GM10248 (cell line): ENCODE measurements at regions of chr10 and their contacts with region 1.

Region 1: DNA sequence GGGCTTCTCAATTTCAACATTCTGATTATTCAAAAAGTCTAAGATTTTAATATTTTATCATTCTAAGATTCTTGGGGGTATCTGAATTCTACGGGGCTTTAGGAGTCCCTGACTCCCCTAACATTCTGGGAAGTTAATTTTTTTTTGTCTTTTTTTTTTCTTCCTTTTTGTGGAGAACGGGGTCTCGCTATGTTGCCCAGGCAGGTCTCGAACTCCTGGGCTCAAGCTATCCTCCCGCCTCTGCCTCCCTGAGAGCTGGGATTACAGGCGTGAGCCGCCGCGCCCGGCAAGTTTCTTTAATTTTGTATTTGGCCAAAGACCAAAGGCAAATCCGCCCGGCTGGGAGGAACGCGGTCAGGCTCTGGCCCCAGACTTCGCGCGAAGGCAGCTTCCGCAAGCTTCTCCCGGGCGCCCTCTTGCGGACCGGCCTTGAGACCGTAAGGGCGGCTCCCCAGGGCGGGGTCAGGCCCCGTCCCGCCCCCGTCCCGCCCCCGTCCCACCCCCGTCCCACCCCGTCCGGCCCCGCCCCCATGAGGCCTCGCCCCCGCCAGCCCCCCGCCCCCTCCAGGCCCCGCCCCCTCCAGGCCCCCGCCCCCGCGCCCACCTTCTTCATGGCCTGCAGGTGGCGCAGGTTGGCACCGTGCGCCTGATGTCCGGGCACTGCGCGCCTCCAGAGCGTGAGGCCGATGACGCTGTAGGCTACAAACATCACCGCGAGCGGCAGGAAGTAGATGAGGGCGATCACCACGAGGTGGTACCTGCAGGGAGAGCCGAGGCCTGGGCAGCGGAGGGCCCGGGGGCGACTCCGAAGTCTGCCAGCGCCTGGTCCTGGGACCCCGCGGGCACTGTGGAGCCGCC is 8.2 kb downstream of the TACR2 start:
- DNase-seq: peak; percentile 95
- CTCF ChIP-seq: peak; percentile 86

Region 2: DNA sequence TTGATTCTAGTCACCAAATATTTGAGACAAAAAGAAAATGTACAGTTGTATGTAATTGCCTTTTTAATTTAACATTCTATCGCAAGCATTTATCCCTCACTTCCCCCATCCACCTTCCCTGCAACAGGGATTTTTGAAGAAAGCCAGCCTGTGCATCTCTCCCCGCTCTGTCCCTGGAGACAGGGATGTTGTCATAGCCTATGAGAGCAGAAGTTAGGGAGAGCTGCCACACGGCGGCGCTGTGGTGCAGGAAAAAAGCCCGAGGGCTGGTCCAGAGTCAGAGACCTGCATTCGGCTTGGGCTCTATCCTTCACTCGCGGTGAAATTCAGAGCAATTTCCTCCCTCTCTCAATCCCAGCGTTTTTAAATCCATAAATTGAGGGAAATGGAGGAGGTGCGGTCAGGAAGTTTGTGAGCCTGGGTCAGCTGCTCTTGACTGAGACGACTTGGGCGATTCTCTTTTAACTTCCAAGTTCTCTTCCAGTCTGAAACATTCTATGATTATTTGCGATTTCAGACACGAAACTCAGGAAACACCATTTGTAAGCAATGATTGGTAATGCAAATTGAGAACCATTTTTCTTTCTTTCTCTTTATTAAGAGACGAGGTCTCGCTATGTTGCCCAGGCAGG is 170.9 kb before region 1 on chr10:
- CTCF ChIA-PET with region 1: interaction called, 40 read pairs
- POLR2A ChIA-PET with region 1: no interaction called
- DNase-seq: peak; percentile 87
- CTCF ChIP-seq: peak; percentile 96

Region 3: GRCh38 chr10:69392481-69393000 is 16.0 kb before region 1 on chr10:
- CTCF ChIA-PET with region 1: interaction called, 30 read pairs
- POLR2A ChIA-PET with region 1: no interaction called
- DNase-seq: peak; percentile 88
- CTCF ChIP-seq: peak; percentile 96

Region 4: GRCh38 chr10:69397972-69398371 is 10.6 kb before region 1 on chr10:
- CTCF ChIA-PET with region 1: interaction called, 30 read pairs
- POLR2A ChIA-PET with region 1: no interaction called
- DNase-seq: no peak
- CTCF ChIP-seq: no peak

Region 5: DNA sequence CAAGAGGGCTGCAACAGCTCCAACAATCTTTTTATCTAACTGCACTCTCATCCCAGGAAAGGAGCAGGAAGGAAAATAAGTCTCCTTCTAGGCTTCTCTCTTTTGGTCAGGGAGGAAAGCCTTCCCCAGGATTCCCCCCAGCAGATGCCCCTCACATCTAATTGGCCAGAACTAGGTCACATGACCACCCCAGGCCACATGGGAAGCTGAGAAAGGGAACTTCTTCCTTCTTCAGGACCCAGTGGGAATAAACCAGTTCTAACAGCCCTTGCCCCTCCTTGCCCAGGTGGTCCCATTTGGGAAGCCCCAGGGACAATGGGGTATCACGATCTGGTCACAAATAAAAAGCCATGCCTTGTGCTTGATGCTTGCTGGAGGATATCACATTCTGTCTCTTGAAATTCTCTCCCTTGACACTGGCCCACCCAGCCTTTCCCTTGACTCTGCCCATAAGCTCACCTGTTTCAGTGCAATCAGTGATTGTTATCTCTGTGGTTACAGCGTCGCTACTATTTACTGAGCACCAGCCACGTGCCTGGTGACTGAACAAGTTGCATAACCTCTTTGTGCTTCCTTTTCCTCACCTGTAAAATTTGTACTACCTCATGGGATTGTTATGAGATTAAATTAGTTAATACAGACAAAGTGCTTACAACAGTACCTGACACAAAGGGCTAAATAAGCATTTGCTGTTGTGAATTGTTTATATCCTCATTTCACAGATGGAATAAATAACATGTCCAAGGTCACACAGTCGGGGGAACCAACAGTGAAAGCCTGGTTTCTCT is 17.2 kb after region 1 on chr10:
- CTCF ChIA-PET with region 1: interaction called, 19 read pairs
- POLR2A ChIA-PET with region 1: no interaction called
- DNase-seq: no peak
- CTCF ChIP-seq: no peak

Region 6: GRCh38 chr10:69439813-69440506 is 31.4 kb after region 1 on chr10:
- CTCF ChIA-PET with region 1: no interaction called
- POLR2A ChIA-PET with region 1: no interaction called
- DNase-seq: no peak
- CTCF ChIP-seq: no peak

Region 7: GRCh38 chr10:69506834-69507721 is 98.5 kb after region 1 on chr10:
- CTCF ChIA-PET with region 1: interaction called, 20 read pairs
- POLR2A ChIA-PET with region 1: no interaction called
- DNase-seq: no peak
- CTCF ChIP-seq: no peak